Heart right ventricle (tissue), 16 donors: ENCODE measurements at regions of chr1 and their contacts with region 1.

Region 1: DNA sequence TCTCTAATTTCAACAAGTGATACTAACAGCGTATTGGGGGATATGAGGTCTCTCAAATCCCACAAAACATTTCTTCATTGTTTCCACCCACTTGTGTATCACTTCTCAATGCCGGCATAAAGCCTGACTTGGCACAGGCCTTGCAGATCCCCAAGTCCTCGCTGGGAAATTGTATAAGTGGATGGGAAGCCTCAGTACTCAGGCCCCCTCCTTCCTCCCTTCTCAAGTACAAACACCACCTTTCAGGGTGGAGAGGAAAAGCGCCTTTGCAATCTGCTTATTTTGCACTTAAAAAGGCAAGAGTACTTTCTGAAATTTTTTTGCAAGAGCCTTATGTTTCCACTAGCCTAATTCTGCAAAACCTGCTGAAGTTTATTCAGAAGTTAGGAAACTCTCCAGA is 25.8 kb upstream of the KLHDC8A start:
- DNase-seq: no peak
- ATAC-seq: no peak
- H3K4me3 ChIP-seq: no peak overlapping the region
- H3K27ac ChIP-seq: no peak overlapping the region
- H3K4me1 ChIP-seq: no peaks in the 10 kb centered on the region
- H3K27me3 ChIP-seq: peaks cover 0 to 28% (median 15%) of the 10 kb centered on the region in 7 donors
- CTCF ChIP-seq: no peak

Region 2: GRCh38 chr1:205354259-205354904 is 28.2 kb before region 1 on chr1:
- intact Hi-C with region 1: loop called in 1 of 10 experiments (anchors 1 kb)
- DNase-seq: peak in 1 of 2 donors; percentile 56
- ATAC-seq: peak in 4 of 8 donors; percentile 43 to 61 (median 47)
- H3K4me3 ChIP-seq: no peak overlapping the region
- H3K27ac ChIP-seq: no peak overlapping the region
- H3K4me1 ChIP-seq: peaks cover 0 to 19% (median 0%) of the 10 kb centered on the region in 9 donors
- H3K27me3 ChIP-seq: peaks cover 7 to 27% (median 20%) of the 10 kb centered on the region in 7 donors
- CTCF ChIP-seq: peak; percentile 71 to 90 (median 83)